ENCODE measurements at regions of chr12 and their contacts with region 1.

Region 1: GRCh38 chr12:21962236-21962635 is 21.0 kb upstream of the ABCC9 start:
- DNase-seq: no peak
- H3K4me3 ChIP-seq: no peak overlapping the region
- H3K27ac ChIP-seq: no peak overlapping the region
- H3K4me1 ChIP-seq: no peaks in the 10 kb centered on the region
- H3K27me3 ChIP-seq: no peaks in the 10 kb centered on the region
- CTCF ChIP-seq: no peak
- EP300 ChIP-seq: no peak
- POLR2A ChIP-seq: no peak
- RAD21 ChIP-seq: no peak

Region 2: GRCh38 chr12:21888276-21888868 is 73.9 kb before region 1 on chr12:
- CTCF ChIA-PET with region 1: no interaction called
- POLR2A ChIA-PET with region 1: no interaction called
- DNase-seq: no peak
- H3K4me3 ChIP-seq: no peak overlapping the region
- H3K27ac ChIP-seq: no peak overlapping the region
- H3K4me1 ChIP-seq: no peaks in the 10 kb centered on the region
- H3K27me3 ChIP-seq: no peaks in the 10 kb centered on the region
- CTCF ChIP-seq: no peak
- EP300 ChIP-seq: no peak
- POLR2A ChIP-seq: no peak
- RAD21 ChIP-seq: no peak

Region 3: GRCh38 chr12:21940549-21941505 is 21.4 kb before region 1 on chr12 and contains the start of gene ABCC9:
- CTCF ChIA-PET with region 1: interaction called, 11 read pairs
- POLR2A ChIA-PET with region 1: no interaction called
- DNase-seq: peak in 1 of 2 experiments; percentile 61
- H3K4me3 ChIP-seq: peak within 1 kb of the TSS; percentile 60 to 70 (median 65)
- H3K27ac ChIP-seq: no peak within 1 kb of the TSS
- H3K4me1 ChIP-seq: no peaks in the 10 kb centered on the region
- H3K27me3 ChIP-seq: peaks cover 1 to 32% (median 26%) of the 10 kb centered on the region in 4 experiments
- CTCF ChIP-seq: no peak
- EP300 ChIP-seq: no peak
- POLR2A ChIP-seq: no peak
- RAD21 ChIP-seq: no peak
- total RNA-seq, gene ABCC9: not detected in 2 replicates

Region 4: DNA sequence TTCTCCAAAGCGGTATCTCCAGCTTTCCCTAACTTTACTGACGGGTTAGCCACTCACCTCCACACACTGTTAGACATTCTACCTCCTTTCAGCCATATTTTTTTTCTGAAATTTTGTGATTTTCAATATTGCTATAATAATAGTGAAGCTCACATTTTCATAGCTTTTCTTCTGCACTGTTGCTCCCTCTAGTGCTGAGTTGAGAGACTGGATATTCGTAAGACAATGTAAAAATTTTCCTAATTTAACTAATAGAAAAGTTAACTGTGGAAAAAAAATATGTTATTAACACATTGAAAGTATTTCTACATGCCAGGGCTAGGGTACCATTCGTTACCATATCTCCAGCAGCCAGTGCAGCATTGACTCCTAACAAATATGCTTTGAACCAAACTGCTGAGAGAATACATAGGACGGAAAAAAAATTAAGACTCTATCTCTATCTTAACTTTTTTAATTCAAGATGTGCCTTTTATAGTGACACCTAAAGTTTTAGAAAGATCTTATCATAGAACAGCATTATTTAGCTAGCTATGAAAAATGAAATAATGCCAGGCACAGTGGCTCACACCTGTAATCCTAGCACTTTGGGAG is 27.7 kb after region 1 on chr12:
- CTCF ChIA-PET with region 1: interaction called, 23 read pairs
- POLR2A ChIA-PET with region 1: no interaction called
- DNase-seq: no peak
- H3K4me3 ChIP-seq: no peak overlapping the region
- H3K27ac ChIP-seq: no peak overlapping the region
- H3K4me1 ChIP-seq: peaks cover 0 to 4% (median 2%) of the 10 kb centered on the region in 4 experiments; a peak in 1 of 7 replicates
- H3K27me3 ChIP-seq: no peaks in the 10 kb centered on the region
- CTCF ChIP-seq: peak in 2 of 3 experiments; percentile 34 to 38; a peak in 2 of 4 replicates
- EP300 ChIP-seq: no peak
- POLR2A ChIP-seq: no peak
- RAD21 ChIP-seq: peak; percentile 50 to 69

Measured in H1 (cell line).